Cardiac septum (tissue), 1 donor: ENCODE measurements at regions of chr1 and their contacts with region 1.

Region 1: GRCh38 chr1:231757101-231757404 is 130.5 kb downstream of the DISC1 start:
- DNase-seq: no peak

Region 2: DNA sequence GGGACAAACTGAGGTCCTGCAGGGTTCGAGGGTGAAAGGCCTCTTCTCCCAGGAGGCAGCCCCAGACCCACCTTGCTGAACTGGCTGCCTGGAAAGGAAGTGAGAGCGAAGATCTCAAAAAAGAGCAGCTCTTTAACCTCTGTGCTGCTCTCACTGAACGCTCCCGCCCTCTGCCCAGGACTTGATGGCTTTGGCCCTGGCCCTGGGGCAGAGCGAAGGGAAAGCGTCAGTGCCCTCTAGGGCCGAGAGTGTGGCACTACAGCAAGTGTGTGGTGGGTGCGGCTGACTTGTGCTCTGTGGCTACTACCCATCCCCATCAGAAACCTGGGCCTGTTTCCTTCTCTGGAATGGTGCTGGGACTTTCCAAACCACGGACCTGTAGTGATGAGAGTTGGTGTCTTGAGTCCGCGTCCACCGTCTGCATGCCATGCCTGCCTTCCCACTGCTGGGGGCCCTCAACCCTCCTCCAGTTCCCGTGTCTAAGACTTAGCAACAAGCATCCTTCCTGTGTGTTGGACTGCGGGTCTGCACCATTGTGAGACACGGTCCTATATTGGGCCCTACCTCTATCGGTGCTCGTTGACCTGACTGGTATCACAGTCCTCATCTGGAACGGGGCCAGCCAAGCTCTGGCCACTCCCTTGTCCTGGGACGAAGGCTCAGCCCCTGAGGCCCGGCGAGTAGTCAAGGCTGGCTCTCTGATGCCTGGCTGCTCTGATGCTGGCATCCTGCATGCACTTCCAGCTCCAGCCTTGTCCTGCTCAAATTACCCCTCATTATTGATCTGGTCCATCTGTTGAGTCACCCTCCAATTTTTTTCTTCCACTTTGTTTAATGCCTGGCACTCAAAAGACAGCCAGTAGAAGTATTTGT is 49.8 kb after region 1 on chr1:
- intact Hi-C with region 1: loop called (anchors 5 kb)
- DNase-seq: peak; percentile 82

Region 3: GRCh38 chr1:232127190-232127589 is 370.1 kb after region 1 on chr1:
- intact Hi-C with region 1: no loop called
- DNase-seq: no peak

Region 4: DNA sequence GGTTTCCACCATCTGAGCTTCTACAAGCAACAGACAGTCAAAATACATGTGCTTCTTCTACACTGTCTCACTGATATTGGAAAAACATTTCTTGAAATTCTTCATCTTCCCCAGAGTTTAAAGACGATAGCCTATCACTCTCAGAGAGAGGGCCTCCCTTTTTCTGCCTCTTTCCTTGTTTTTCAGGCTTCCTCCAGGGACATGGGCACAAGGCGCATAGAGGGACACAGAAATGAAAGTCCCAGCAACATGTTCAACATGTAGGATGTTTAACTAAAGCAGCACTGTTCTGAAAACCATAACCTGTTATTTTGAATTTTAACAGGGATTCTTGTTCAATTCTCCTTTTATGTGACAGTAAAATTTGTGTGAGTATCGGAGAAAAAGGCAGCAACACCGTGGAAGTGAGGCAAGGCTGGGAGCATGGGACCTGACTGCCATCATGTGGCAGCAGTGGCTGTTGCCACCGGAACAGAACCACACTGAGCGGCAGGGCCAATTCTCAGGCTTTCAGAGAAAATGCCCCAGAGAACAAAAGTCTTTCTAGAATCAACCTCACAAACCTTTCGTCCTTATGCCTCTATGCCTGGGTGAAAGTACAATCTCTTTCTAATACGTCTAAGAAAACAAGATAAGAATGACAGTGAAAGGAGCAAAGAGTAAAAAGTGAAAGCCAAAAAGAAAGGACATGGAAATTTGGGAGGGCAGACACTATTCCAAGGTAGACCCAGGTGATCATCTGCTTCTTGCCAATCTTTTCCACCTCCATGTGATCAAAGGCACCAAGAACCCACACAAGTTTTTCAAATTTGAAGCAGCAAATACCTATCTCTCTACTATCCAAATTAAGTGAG is 1484.0 kb after region 1 on chr1:
- intact Hi-C with region 1: loop called (anchors 10 kb)
- DNase-seq: peak; percentile 87